ENCODE measurements at regions of chr9 and their contacts with region 1.

Region 1: DNA sequence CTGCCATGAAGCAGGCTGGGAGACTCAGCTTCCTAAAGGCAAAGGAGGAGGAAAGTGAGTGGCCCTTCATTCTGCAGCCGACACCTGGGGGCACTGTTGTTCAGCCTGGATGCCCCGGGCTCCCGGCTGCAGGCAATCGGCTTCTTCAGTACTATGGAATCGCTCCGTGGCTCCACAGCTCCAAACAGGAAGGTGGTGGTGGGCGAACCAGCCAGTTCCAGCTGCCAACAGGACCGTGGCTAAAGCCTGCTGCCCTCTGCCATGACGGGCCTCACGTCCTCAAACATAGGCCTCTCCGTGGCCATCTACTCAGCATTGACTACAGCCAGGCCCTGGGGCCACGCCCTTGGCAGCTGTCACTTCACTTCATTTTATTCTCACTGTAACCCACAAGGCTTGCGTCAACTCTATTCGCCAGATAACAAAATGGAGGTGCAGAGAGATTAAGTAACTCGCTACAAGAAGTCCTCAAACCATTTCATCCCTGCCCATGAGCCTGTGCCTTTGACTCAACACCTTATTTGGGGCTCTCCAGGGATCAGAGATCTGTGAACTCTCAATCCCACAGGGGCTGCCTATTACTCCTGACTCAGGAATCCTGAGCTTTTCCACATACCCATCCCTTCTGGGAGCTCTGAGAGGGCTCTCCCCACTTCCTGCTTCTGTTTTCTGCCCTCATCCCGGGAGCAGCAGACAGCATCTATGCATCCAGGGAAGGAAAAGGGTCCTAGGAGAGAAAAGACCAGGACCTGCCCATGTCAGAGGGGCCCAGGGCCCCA is 38.0 kb downstream of the PAX5 start:
- DNase-seq: peak; percentile 89
- H3K4me3 ChIP-seq: no peak overlapping the region
- H3K27ac ChIP-seq: no peak overlapping the region
- H3K4me1 ChIP-seq: peaks cover 19% of the 10 kb centered on the region
- H3K27me3 ChIP-seq: no peaks in the 10 kb centered on the region
- CTCF ChIP-seq: peak; percentile 89

Region 2: GRCh38 chr9:36772450-36773403 is 223.4 kb before region 1 on chr9:
- CTCF ChIA-PET with region 1: no interaction called
- POLR2A ChIA-PET with region 1: no interaction called
- intact Hi-C with region 1: no loop called
- DNase-seq: peak; percentile 28
- H3K4me3 ChIP-seq: no peak overlapping the region
- H3K27ac ChIP-seq: no peak overlapping the region
- H3K4me1 ChIP-seq: no peaks in the 10 kb centered on the region
- H3K27me3 ChIP-seq: peaks cover 48% of the 10 kb centered on the region
- CTCF ChIP-seq: no peak

Region 3: DNA sequence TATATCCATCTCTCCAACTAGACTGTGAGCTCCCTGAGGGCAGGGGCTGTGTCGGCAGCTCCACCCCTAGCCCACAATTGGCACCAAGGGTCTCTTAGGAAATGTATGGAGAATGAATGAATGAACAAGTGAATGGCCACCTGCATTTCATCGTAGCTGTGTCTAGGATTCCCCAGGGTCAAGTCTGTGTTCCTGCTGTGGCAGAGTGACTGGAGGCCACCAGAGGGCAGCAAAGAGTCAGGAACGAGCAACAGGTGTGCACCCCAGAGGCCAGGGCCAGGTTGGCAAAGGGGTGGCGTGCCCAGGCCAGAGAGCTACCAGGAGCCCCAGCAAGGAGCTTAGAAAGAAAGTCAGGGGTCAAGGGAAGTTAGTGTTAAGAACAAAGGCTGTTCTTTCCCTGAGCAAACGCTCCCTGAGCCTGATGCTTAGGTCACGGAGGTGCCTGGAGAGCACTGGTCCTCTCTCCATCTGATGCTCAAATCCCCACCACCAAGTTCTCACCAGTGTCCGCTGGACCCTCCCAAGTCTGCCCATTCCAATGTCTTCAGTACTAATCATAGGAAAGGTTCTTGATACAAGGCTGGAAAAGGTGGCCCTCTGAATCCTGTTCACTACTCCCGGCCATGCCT is 122.8 kb before region 1 on chr9:
- CTCF ChIA-PET with region 1: interaction called, 11 read pairs
- POLR2A ChIA-PET with region 1: no interaction called
- intact Hi-C with region 1: loop called (anchors 1 kb)
- DNase-seq: peak; percentile 72
- H3K4me3 ChIP-seq: no peak overlapping the region
- H3K27ac ChIP-seq: no peak overlapping the region
- H3K4me1 ChIP-seq: no peaks in the 10 kb centered on the region
- H3K27me3 ChIP-seq: no peaks in the 10 kb centered on the region
- CTCF ChIP-seq: peak; percentile 95

Region 4: GRCh38 chr9:37262410-37262809 is 266.3 kb after region 1 on chr9:
- CTCF ChIA-PET with region 1: interaction called, 5 read pairs
- POLR2A ChIA-PET with region 1: no interaction called
- intact Hi-C with region 1: loop called (anchors 2 kb)
- DNase-seq: peak; percentile 68
- H3K4me3 ChIP-seq: no peak overlapping the region
- H3K27ac ChIP-seq: no peak overlapping the region
- H3K4me1 ChIP-seq: peaks cover 11% of the 10 kb centered on the region
- H3K27me3 ChIP-seq: no peaks in the 10 kb centered on the region
- CTCF ChIP-seq: peak; percentile 80

Region 5: GRCh38 chr9:37324261-37324683 is 328.2 kb after region 1 on chr9:
- CTCF ChIA-PET with region 1: interaction called, 12 read pairs
- POLR2A ChIA-PET with region 1: no interaction called
- intact Hi-C with region 1: loop called (anchors 1 kb)
- DNase-seq: peak; percentile 96
- H3K4me3 ChIP-seq: peak overlapping the region; percentile 5
- H3K27ac ChIP-seq: peak overlapping the region; percentile 66
- H3K4me1 ChIP-seq: peaks cover 63% of the 10 kb centered on the region
- H3K27me3 ChIP-seq: no peaks in the 10 kb centered on the region
- CTCF ChIP-seq: no peak